CD8-positive, alpha-beta T cell (primary cell): ENCODE measurements at regions of chr7 and their contacts with region 1.

Region 1: GRCh38 chr7:45160417-45160881 is 2.9 kb downstream of the RAMP3 start:
- DNase-seq: no peak
- ATAC-seq: no peak
- H3K4me3 ChIP-seq: no peak overlapping the region
- H3K4me3 Mint-ChIP-seq: no peak overlapping the region
- H3K27ac ChIP-seq: no peak overlapping the region
- H3K27ac Mint-ChIP-seq: no peak overlapping the region
- H3K4me1 ChIP-seq: no peaks in the 10 kb centered on the region
- H3K4me1 Mint-ChIP-seq: peaks cover 8% of the 10 kb centered on the region
- H3K27me3 ChIP-seq: peaks cover 4 to 7% of the 10 kb centered on the region in 2 experiments
- H3K27me3 Mint-ChIP-seq: peaks cover 21% of the 10 kb centered on the region
- CTCF ChIP-seq: no peak

Region 2: GRCh38 chr7:45420843-45421495 is 260.5 kb after region 1 on chr7:
- CTCF ChIA-PET with region 1: no interaction called
- POLR2A ChIA-PET with region 1: no interaction called
- intact Hi-C with region 1: no loop called
- DNase-seq: no peak
- ATAC-seq: no peak
- H3K4me3 ChIP-seq: no peak overlapping the region
- H3K4me3 Mint-ChIP-seq: no peak overlapping the region
- H3K27ac ChIP-seq: no peak overlapping the region
- H3K27ac Mint-ChIP-seq: no peak overlapping the region
- H3K4me1 ChIP-seq: no peaks in the 10 kb centered on the region
- H3K4me1 Mint-ChIP-seq: no peaks in the 10 kb centered on the region
- H3K27me3 ChIP-seq: no peaks in the 10 kb centered on the region
- H3K27me3 Mint-ChIP-seq: peaks cover 11% of the 10 kb centered on the region
- CTCF ChIP-seq: no peak

Region 3: DNA sequence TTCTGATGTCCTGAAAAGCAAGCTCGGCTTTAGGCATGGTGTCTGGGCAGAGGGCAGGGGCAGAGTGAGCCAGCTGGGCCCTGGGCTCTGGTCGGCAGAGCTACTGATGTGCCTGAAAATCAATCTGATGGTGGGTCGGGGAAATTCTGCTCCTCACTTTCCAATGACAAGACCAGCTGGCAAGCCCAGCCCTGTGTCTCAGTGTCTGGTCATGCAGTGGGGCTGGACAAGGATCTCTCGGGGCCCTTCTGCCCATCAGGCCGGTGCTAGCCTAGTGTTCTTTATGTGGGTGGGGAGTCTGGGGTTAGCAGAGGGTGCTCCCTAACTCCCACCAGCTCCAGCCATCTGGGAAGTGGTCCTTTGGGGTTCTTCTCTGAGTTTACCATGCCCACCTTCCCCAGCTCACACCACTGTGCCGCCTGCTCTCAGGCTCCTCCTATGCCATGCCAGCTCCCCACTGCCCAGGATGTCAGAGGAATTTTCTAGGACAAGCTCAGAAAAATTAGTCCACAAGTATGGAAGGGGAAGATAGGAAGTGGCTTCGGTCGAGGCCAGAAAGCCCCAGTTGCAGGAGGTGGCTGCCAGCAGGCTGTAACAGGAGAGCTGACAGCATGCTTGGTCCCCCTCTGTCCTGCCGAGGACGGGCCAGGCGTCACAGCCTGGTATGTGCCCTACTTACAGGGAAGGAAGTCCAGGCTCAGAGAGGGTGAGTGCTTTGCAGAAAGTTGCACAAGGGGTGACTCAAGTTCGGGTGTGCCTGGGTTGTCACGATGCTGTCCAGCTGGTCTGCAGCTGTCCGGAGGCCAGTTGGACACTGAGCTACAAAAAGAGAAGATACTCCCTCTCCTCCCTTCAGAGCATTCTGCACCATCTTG is 549.0 kb after region 1 on chr7:
- CTCF ChIA-PET with region 1: no interaction called
- POLR2A ChIA-PET with region 1: no interaction called
- intact Hi-C with region 1: loop called in 1 of 2 experiments (anchors 10 kb)
- DNase-seq: no peak
- ATAC-seq: no peak
- H3K4me3 ChIP-seq: no peak overlapping the region
- H3K4me3 Mint-ChIP-seq: no peak overlapping the region
- H3K27ac ChIP-seq: no peak overlapping the region
- H3K27ac Mint-ChIP-seq: no peak overlapping the region
- H3K4me1 ChIP-seq: no peaks in the 10 kb centered on the region
- H3K4me1 Mint-ChIP-seq: no peaks in the 10 kb centered on the region
- H3K27me3 ChIP-seq: no peaks in the 10 kb centered on the region
- H3K27me3 Mint-ChIP-seq: no peaks in the 10 kb centered on the region
- CTCF ChIP-seq: no peak